Aorta (tissue), 5 donors: ENCODE measurements at regions of chr14 and their contacts with region 1.

Region 1: DNA sequence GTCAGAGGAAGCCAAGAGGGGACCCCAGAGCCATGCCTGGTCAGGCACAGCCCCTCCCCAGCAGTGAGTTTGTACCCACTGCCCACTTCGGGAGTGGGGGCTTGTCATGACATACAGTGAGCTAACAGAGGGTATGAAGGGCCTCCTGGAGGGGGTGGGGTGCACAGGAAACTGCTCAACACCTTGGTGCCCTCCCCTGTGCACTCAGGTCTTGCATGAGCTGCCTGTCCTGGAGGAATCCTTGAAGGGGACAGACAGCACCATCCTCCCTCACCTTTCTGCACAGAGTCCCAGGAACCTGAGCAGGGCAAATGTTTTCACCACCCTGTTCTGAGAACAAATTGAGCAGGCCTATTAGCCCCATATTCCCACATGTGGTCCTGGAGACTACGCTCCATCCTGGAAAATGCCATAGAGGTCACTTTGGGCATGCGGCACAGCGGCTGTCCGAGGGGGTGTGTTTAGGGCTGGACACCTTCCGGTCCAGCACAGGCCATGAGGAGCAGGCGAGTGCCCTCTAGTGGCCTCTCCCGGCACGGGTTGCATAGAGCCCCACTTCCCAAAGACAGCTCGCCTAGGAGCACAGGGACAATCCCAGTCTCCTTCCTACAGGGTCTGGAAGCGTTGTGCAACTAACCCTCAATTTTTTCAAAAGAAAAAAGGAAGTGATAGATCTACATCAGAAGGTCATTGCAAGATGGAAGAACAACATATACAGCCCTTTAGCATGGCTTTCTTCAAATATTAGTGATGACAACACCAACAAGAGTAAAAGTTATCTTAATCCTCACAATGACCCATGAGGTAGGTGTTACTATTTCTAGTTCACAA is 31.9 kb upstream of the ZFP36L1 start:
- DNase-seq: peak; percentile 90 to 95
- ATAC-seq: peak; percentile 91
- H3K4me3 ChIP-seq: no peak overlapping the region
- H3K27ac ChIP-seq: no peak overlapping the region
- H3K4me1 ChIP-seq: no peaks in the 10 kb centered on the region
- H3K27me3 ChIP-seq: no peaks in the 10 kb centered on the region

Region 2: DNA sequence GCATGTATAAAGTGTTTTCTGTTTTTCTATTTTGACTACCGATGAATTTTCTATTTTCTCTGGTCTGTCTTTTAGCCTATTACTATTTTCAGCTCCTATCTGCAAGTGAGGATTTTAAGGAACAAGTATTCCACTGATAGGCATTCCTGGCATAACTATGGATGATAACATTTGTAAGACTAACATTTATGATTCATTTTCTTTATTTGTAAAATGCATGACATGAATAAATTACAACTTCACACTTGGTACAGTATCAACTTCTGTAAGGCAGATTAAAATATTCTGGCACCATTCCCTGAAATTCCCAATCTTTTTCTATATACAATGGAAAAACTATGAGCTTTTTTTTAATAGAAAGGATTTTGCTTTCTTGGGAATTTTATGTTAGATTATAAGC is 1756.5 kb before region 1 on chr14:
- intact Hi-C with region 1: no loop called
- DNase-seq: no peak
- ATAC-seq: no peak
- H3K4me3 ChIP-seq: no peak overlapping the region
- H3K27ac ChIP-seq: no peak overlapping the region
- H3K4me1 ChIP-seq: no peaks in the 10 kb centered on the region
- H3K27me3 ChIP-seq: no peaks in the 10 kb centered on the region

Region 3: DNA sequence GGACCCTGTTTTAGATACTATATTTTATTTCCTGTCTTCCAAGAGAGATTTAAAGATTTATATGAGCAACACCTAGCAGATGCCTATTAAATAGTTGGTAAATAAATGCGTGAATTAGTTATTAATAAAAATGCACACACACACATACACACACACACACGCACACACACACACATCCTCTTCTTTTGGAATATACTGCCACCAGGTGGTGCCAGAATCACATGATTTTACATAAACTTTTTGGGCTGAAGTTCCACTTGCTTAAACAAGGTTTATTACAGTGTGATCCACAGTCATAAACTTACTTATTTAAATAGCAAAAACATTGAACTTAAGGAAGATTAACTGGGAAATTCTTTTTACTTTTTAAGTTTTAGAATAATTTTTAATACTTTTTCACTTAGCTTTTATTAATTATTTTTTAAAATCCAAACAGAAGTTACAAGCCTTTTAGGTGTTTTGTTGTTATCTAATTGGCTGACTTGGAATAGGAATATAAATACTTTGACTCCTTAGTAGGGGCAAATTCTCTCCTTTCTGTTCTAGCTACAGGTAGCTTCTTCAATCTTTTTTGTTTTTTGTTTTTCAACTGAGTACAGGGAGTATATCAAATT is 987.6 kb before region 1 on chr14:
- intact Hi-C with region 1: loop called (anchors 10 kb)
- DNase-seq: no peak
- ATAC-seq: no peak
- H3K4me3 ChIP-seq: no peak overlapping the region
- H3K27ac ChIP-seq: no peak overlapping the region
- H3K4me1 ChIP-seq: no peaks in the 10 kb centered on the region
- H3K27me3 ChIP-seq: no peaks in the 10 kb centered on the region

Region 4: GRCh38 chr14:67846029-67846610 is 978.6 kb before region 1 on chr14:
- intact Hi-C with region 1: loop called in 1 of 2 experiments (anchors 10 kb)
- DNase-seq: peak in 1 of 2 donors; percentile 52
- ATAC-seq: no peak
- H3K4me3 ChIP-seq: no peak overlapping the region
- H3K27ac ChIP-seq: no peak overlapping the region
- H3K4me1 ChIP-seq: no peaks in the 10 kb centered on the region
- H3K27me3 ChIP-seq: no peaks in the 10 kb centered on the region

Region 5: GRCh38 chr14:67856814-67857213 is 967.9 kb before region 1 on chr14:
- intact Hi-C with region 1: no loop called
- DNase-seq: no peak
- ATAC-seq: no peak
- H3K4me3 ChIP-seq: no peak overlapping the region
- H3K27ac ChIP-seq: no peak overlapping the region
- H3K4me1 ChIP-seq: no peaks in the 10 kb centered on the region
- H3K27me3 ChIP-seq: no peaks in the 10 kb centered on the region

Region 6: GRCh38 chr14:68741839-68742470 is 82.8 kb before region 1 on chr14:
- intact Hi-C with region 1: no loop called
- DNase-seq: no peak
- ATAC-seq: no peak
- H3K4me3 ChIP-seq: no peak overlapping the region
- H3K27ac ChIP-seq: no peak overlapping the region
- H3K4me1 ChIP-seq: no peaks in the 10 kb centered on the region
- H3K27me3 ChIP-seq: no peaks in the 10 kb centered on the region

Region 7: GRCh38 chr14:68874746-68875155 is 50.0 kb after region 1 on chr14:
- intact Hi-C with region 1: no loop called
- DNase-seq: no peak
- ATAC-seq: no peak
- H3K4me3 ChIP-seq: no peak overlapping the region
- H3K27ac ChIP-seq: no peak overlapping the region
- H3K4me1 ChIP-seq: no peaks in the 10 kb centered on the region
- H3K27me3 ChIP-seq: no peaks in the 10 kb centered on the region